ENCODE measurements at regions of chr18 and their contacts with region 1.

Region 1: DNA sequence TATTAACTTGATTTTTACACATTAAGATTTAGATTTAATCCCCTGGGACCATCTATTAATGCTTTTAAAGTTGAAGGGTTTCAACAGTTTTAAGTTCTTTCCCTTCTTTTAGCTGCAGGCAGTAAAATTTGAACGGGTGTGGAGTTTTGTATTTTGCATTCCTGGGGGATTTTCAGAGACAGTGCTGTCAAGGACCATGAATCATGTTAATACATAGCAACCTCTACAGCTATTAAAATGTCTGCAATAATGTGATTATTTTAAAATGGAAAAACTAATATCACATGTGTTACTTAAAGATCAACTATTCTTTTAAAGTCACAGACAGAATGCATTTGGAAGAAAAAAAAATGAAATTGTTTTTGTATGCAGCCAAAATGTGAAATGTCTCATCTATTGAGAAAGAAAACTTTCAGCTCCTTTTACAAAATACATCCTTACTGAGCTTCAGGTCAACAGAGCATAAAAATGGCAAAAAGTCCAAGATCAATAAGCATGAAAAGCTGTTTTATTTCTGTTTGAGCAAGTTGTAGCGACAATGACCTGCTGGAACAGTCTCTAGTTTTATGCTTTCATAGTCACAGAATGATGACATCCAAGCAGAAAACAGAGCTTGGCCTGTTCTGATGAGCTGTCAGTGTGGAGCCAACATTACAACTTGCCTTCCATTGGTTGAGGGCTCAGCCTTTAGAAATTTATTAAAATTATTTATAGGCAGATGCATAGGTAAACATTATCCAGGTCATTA is 21.6 kb upstream of the ZNF521 start:
- DNase-seq: no peak
- ATAC-seq: no peak
- H3K4me3 ChIP-seq: no peak overlapping the region
- H3K27ac ChIP-seq: no peak overlapping the region
- H3K4me1 ChIP-seq: no peaks in the 10 kb centered on the region
- H3K27me3 ChIP-seq: peaks cover 7% of the 10 kb centered on the region
- CTCF ChIP-seq: no peak

Region 2: GRCh38 chr18:25420077-25420825 is 46.6 kb after region 1 on chr18:
- CTCF ChIA-PET with region 1: no interaction called
- POLR2A ChIA-PET with region 1: no interaction called
- in situ Hi-C with region 1: no loop called
- intact Hi-C with region 1: loop called (anchors 5 kb)
- DNase-seq: no peak
- ATAC-seq: no peak
- H3K4me3 ChIP-seq: no peak overlapping the region
- H3K27ac ChIP-seq: no peak overlapping the region
- H3K4me1 ChIP-seq: no peaks in the 10 kb centered on the region
- H3K27me3 ChIP-seq: no peaks in the 10 kb centered on the region
- CTCF ChIP-seq: no peak